CD14-positive monocyte (primary cell): ENCODE measurements at regions of chr22 and their contacts with region 1.

Region 1: DNA sequence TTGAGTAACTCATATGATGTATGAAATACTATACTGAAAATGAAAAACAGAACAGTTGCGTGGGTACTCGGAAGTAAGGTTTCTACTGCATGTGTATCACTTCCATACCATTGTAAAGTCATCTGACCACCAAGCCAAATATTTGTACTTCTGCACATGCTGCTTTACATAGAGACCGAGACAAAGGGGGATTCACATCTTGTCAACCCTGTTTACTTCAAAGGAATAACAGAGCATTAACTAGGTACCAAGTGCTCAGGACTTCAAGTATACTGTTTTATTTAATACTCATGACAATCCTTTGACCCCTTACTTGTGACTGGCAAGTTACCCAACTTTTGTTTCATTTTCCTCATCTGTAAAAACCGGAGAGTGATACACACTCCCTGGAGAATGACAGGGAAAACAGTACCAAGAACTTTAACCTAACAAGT is 9.9 kb downstream of the MAPK1 start:
- DNase-seq: peak; percentile 36 to 65 (median 42)
- H3K4me3 ChIP-seq: peak overlapping the region in 1 of 3 experiments; percentile 49
- H3K4me3 Mint-ChIP-seq: peak overlapping the region; percentile 56 to 68
- H3K27ac ChIP-seq: peak overlapping the region; percentile 56 to 85
- H3K27ac Mint-ChIP-seq: peak overlapping the region; percentile 88 to 98 (median 91)
- H3K4me1 ChIP-seq: peaks cover 70 to 76% of the 10 kb centered on the region in 2 donors
- H3K4me1 Mint-ChIP-seq: peaks cover 84% of the 10 kb centered on the region
- H3K27me3 ChIP-seq: no peaks in the 10 kb centered on the region
- H3K27me3 Mint-ChIP-seq: peaks cover 0 to 2% (median 0%) of the 10 kb centered on the region in 3 donors
- CTCF ChIP-seq: no peak

Region 2: GRCh38 chr22:21816787-21817496 is 40.6 kb before region 1 on chr22:
- intact Hi-C with region 1: loop called (anchors 2 to 5 kb)
- DNase-seq: peak; percentile 91 to 98 (median 96)
- H3K4me3 ChIP-seq: peak overlapping the region; percentile 24 to 70 (median 33)
- H3K4me3 Mint-ChIP-seq: peak overlapping the region; percentile 75 to 82
- H3K27ac ChIP-seq: peak overlapping the region; percentile 98
- H3K27ac Mint-ChIP-seq: peak overlapping the region; percentile 94 to 100 (median 100)
- H3K4me1 ChIP-seq: peaks cover 55 to 59% of the 10 kb centered on the region in 2 donors
- H3K4me1 Mint-ChIP-seq: peaks cover 62% of the 10 kb centered on the region
- H3K27me3 ChIP-seq: no peaks in the 10 kb centered on the region
- H3K27me3 Mint-ChIP-seq: no peaks in the 10 kb centered on the region
- CTCF ChIP-seq: no peak

Region 3: DNA sequence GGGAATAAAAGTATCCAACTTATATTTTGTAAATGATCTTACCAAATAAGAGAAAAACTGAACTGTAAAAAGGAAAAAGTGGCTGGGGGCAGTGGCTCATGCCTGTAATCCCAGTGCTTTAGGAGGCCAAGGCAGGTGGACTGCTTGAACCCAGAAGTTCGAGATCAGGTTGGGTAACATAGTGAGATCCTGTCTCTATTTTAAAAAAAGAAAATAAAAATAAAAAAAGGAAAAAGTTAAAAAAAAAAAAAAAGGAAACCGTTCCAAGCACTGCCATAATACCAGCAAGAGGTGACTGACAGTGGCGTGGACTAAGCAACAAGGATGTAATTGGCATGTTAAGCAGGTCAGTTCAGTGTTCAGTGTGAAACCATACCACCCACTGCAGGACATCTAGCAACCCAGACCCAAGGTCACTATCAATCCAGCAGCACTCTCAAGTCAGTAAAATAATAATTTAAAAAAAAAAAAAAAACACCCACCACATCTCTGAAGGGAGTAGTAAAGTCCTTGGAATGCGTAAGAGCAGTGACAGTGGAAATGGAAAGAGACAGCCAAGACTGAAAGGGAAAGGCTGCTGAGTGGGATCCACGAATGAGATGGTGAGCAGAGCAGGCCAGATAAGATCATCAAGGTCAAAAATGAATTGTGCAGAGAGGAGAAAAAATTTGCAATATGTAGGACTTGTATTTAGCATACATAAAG is 33.6 kb before region 1 on chr22:
- intact Hi-C with region 1: loop called in 1 of 2 experiments (anchors 5 kb)
- DNase-seq: no peak
- H3K4me3 ChIP-seq: no peak overlapping the region
- H3K4me3 Mint-ChIP-seq: no peak overlapping the region
- H3K27ac ChIP-seq: peak overlapping the region in 1 of 2 donors; percentile 60
- H3K27ac Mint-ChIP-seq: peak overlapping the region in 6 of 7 donors; percentile 66 to 91 (median 80)
- H3K4me1 ChIP-seq: peaks cover 19 to 25% of the 10 kb centered on the region in 2 donors
- H3K4me1 Mint-ChIP-seq: peaks cover 53% of the 10 kb centered on the region
- H3K27me3 ChIP-seq: no peaks in the 10 kb centered on the region
- H3K27me3 Mint-ChIP-seq: peaks cover 0 to 1% (median 1%) of the 10 kb centered on the region in 3 donors
- CTCF ChIP-seq: no peak